Dorsolateral prefrontal cortex (tissue), 120 donors: ENCODE measurements at regions of chr3 and their contacts with region 1.

Region 1: DNA sequence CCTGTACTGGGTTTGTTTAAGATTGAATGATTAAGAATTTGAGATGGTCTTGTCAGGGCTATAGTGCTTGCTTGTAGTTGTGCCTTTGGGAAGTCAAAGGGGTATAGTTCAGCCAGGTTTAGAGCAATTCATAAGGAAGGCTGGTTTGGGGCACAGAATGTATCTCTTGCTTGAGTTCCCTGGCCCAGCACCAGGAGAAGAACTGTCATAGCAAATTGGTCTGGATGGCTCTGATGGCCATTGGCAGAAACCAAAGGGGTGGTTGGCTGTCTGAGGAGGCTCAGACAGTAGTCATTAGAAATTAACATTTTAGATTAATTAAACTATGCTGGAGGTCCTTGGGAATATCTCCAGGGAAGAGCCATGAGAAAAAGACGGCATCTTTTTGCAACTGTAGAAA is 25.4 kb upstream of the OTOL1 start:
- DNase-seq: peak in 1 of 10 donors; percentile 51
- H3K4me3 ChIP-seq: no peak overlapping the region
- H3K27ac ChIP-seq: no peak overlapping the region
- H3K27me3 ChIP-seq: no peaks in the 10 kb centered on the region
- CTCF ChIP-seq: no peak

Region 2: DNA sequence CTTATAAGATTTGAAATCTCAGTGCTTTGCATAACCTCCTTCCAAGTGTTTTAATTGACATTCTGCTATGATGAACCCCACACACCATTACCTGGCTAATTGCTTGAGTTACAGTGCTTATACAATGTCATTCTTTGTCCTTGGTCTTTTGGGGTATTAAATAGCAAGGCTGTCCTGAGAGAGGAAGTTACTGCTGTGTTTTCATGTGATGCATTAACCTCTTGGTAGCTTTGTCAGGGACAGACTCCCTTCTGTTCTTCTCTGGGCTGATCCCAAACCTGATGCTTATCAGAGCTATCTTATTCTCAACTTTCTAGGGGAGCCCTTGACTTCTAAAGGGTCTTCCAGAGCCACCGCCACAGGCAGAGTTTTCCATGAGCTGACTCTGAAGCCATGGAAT is 13.0 kb after region 1 on chr3:
- intact Hi-C with region 1: loop called in 1 of 2 experiments (anchors 1 kb)
- DNase-seq: no peak
- H3K4me3 ChIP-seq: no peak overlapping the region
- H3K27ac ChIP-seq: no peak overlapping the region
- H3K27me3 ChIP-seq: no peaks in the 10 kb centered on the region
- CTCF ChIP-seq: no peak